ENCODE measurements at regions of chr17 and their contacts with region 1.

Region 1: GRCh38 chr17:19513897-19514488 is 19.7 kb upstream of the SLC47A1 start:
- DNase-seq: peak in 2 of 3 donors; percentile 71 to 83
- ATAC-seq: peak; percentile 82
- H3K4me3 ChIP-seq: no peak overlapping the region
- H3K4me1 ChIP-seq: no peaks in the 10 kb centered on the region
- CTCF ChIP-seq: peak; percentile 65

Region 2: GRCh38 chr17:19377602-19378392 is 136.2 kb before region 1 on chr17:
- intact Hi-C with region 1: no loop called
- DNase-seq: peak; percentile 96 to 99 (median 99)
- ATAC-seq: peak; percentile 89
- H3K4me3 ChIP-seq: peak overlapping the region; percentile 71
- H3K4me1 ChIP-seq: peaks cover 13% of the 10 kb centered on the region
- CTCF ChIP-seq: peak; percentile 25

Region 3: DNA sequence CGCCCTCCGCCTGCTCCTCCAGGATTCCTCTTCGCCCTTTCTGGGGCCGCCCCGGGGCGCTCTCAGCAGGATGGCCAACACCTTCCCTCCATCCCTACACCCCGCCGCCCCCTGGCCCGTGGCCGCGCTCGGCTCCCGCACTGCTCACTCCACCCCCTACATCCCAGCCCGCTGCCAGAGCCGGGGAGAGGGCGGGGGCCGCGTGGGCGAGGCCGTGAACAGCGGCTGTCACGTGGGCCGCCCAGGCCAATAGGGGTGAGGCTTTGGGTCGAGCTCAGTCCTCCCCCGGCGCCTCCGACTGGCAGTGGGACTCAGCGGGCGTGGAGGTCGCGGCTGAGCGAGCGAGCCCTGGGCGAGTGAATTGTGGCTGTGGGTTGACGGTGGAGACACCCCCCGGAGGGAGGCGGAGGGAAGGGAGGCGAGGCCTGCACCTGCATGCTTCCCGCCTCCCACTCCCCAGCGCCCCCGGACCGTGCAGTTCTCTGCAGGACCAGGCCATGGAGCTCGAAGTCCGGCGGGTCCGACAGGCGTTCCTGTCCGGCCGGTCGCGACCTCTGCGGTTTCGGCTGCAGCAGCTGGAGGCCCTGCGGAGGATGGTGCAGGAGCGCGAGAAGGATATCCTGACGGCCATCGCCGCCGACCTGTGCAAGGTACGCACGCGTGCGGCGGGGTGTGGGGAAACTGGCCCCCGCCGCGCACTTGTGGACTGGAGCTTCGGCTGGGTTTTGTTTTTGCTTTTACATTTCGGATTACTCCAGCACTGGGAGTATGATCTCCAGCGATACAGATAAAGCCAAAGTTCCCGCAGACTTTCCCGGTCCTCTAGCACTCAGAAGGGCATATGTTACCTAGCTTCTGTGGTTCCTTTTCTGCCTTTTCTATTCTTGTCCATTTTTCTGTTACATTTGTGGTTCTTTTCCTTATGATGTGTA is 134.7 kb after region 1 on chr17 and contains the start of gene ALDH3A2:
- intact Hi-C with region 1: loop called in 1 of 2 experiments (anchors 5 kb)
- DNase-seq: peak; percentile 97 to 99 (median 98)
- ATAC-seq: peak; percentile 96
- H3K4me3 ChIP-seq: peak within 1 kb of the TSS; percentile 39
- H3K4me1 ChIP-seq: peaks cover 35% of the 10 kb centered on the region
- CTCF ChIP-seq: no peak
- total RNA-seq, gene ALDH3A2: 93.8 to 129 (median 98.1) TPM

Region 4: DNA sequence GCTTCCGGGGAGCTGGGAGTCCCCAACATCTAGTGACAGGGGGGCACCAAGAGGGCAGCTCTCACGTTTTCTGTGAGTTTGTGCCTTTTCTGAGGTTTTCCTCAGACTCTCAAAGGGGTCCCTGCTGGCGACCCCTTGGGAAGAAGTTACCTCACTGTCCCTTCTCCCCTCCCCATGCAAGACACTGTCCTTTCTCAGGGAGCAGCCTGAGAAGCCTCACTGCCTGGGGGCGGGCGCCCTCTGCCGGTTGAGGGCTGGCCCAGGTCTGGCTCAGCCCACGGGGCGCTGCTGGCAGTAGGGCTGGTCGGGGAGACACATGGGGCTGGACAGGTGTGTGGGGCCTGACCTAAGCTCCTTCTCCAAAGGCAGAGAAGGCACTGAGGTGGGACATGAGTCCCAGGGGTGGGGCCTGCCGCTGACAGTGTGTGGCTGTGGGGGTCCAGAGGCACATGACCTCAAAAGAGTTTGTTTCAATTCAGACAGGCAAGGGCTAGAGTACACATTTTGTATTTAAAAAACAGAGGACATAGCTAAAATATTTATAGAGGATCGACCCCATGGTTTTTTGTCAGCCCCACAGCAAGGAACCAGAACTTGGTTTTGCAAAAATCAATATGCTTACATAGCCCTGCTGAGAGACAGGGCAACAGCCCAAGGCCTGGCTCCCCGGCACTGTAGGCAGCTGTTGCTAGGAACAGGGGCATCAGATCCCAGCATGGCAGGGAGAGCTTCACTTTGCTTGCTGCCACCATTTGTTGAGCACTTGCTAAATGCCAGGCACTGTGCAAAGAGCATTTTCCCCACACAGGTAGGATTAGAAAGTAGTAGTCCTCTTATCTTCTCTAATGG is 252.7 kb after region 1 on chr17:
- intact Hi-C with region 1: loop called (anchors 5 kb)
- DNase-seq: peak in 2 of 3 donors; percentile 87 to 90
- ATAC-seq: peak; percentile 94
- H3K4me3 ChIP-seq: no peak overlapping the region
- H3K4me1 ChIP-seq: no peaks in the 10 kb centered on the region
- CTCF ChIP-seq: peak; percentile 85

Measured in mucosa of descending colon (tissue), 3 donors.